Dendritic cell treated with granulocyte-macrophage colony-stimulating factor and Interleukin-4, amounts not matched to agents 40 ng/mL and 50 ng/mL, for 4 days (primary cell): ENCODE measurements at regions of chr9 and their contacts with region 1.

Region 1: GRCh38 chr9:127734747-127735529 is at the start of gene TOR2A:
- H3K4me3 Mint-ChIP-seq: peak within 1 kb of the TSS; percentile 82
- H3K27ac Mint-ChIP-seq: peak within 1 kb of the TSS; percentile 86
- H3K4me1 Mint-ChIP-seq: peaks cover 20% of the 10 kb centered on the region
- H3K27me3 Mint-ChIP-seq: no peaks in the 10 kb centered on the region

Region 2: GRCh38 chr9:127505481-127506173 is 229.3 kb before region 1 on chr9:
- intact Hi-C with region 1: no loop called
- H3K4me3 Mint-ChIP-seq: no peak overlapping the region
- H3K27ac Mint-ChIP-seq: no peak overlapping the region
- H3K4me1 Mint-ChIP-seq: no peaks in the 10 kb centered on the region
- H3K27me3 Mint-ChIP-seq: no peaks in the 10 kb centered on the region

Region 3: GRCh38 chr9:127525401-127526187 is 209.3 kb before region 1 on chr9:
- intact Hi-C with region 1: loop called (anchors 10 kb)
- H3K4me3 Mint-ChIP-seq: no peak overlapping the region
- H3K27ac Mint-ChIP-seq: peak overlapping the region; percentile 43
- H3K4me1 Mint-ChIP-seq: peaks cover 64% of the 10 kb centered on the region
- H3K27me3 Mint-ChIP-seq: no peaks in the 10 kb centered on the region

Region 4: GRCh38 chr9:127586537-127586936 is 148.4 kb before region 1 on chr9:
- intact Hi-C with region 1: loop called (anchors 1 kb)
- H3K4me3 Mint-ChIP-seq: peak overlapping the region; percentile 53
- H3K27ac Mint-ChIP-seq: peak overlapping the region; percentile 10
- H3K4me1 Mint-ChIP-seq: peaks cover 61% of the 10 kb centered on the region
- H3K27me3 Mint-ChIP-seq: no peaks in the 10 kb centered on the region

Region 5: DNA sequence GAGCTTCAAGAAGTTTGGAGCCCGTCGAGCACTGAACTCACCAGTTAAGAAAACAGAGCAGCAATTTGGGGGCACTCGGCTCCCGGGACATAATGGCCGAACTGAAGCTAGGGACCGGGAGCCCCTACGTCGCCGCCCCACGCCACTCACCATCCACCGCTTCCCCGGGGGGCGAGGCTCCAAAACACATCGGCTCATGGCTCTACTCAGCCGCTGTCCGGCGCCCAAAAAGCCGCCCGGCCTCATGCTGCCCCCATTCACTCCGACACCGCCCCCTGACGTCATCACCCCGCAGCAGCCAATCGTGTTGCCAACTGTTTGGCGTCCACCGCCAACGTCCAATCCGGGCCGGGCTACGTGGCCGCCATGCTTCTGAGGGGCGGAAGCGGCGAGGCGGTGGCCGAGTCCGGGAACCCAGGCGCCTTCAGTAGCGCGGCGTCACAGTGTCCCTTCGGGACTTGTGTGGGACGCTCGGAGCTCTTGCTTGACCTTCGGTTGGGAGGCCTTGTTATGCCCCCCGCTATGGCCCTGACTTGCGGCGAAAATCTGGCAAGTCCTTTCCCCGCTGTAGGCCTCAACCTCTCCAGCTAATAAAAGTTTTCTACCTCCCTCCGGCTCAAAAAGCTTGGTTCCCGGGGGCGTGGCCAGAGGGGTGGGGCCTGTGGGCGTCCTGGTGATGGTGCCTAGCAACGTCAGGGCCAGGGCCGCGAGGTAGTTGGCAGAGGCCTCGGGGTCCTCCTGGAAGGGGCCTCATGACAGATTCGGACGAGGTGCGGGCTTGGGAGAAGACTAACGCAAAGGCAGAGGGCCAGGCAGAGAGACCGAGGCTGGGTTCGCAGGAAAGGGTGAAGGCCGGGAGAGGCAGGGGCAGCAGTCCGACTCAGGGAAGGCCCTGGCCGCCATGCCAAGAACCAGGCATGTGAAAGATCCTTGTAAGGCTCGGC is 19.3 kb before region 1 on chr9 and contains the starts of genes PTRH1 and TTC16:
- intact Hi-C with region 1: loop called (anchors 1 kb)
- H3K4me3 Mint-ChIP-seq: peak within 1 kb of the TSS; percentile 98
- H3K27ac Mint-ChIP-seq: peak within 1 kb of the TSS; percentile 90
- H3K4me1 Mint-ChIP-seq: peaks cover 42% of the 10 kb centered on the region
- H3K27me3 Mint-ChIP-seq: peaks cover 13% of the 10 kb centered on the region

Region 6: GRCh38 chr9:127785023-127785932 is 50.3 kb after region 1 on chr9:
- intact Hi-C with region 1: loop called (anchors 1 kb)
- H3K4me3 Mint-ChIP-seq: peak overlapping the region; percentile 97
- H3K27ac Mint-ChIP-seq: peak overlapping the region; percentile 85
- H3K4me1 Mint-ChIP-seq: peaks cover 75% of the 10 kb centered on the region
- H3K27me3 Mint-ChIP-seq: no peaks in the 10 kb centered on the region

Region 7: GRCh38 chr9:127869310-127870152 is 134.6 kb after region 1 on chr9:
- intact Hi-C with region 1: loop called (anchors 2 kb)
- H3K4me3 Mint-ChIP-seq: no peak overlapping the region
- H3K27ac Mint-ChIP-seq: peak overlapping the region; percentile 28
- H3K4me1 Mint-ChIP-seq: peaks cover 40% of the 10 kb centered on the region
- H3K27me3 Mint-ChIP-seq: peaks cover 1% of the 10 kb centered on the region

Region 8: DNA sequence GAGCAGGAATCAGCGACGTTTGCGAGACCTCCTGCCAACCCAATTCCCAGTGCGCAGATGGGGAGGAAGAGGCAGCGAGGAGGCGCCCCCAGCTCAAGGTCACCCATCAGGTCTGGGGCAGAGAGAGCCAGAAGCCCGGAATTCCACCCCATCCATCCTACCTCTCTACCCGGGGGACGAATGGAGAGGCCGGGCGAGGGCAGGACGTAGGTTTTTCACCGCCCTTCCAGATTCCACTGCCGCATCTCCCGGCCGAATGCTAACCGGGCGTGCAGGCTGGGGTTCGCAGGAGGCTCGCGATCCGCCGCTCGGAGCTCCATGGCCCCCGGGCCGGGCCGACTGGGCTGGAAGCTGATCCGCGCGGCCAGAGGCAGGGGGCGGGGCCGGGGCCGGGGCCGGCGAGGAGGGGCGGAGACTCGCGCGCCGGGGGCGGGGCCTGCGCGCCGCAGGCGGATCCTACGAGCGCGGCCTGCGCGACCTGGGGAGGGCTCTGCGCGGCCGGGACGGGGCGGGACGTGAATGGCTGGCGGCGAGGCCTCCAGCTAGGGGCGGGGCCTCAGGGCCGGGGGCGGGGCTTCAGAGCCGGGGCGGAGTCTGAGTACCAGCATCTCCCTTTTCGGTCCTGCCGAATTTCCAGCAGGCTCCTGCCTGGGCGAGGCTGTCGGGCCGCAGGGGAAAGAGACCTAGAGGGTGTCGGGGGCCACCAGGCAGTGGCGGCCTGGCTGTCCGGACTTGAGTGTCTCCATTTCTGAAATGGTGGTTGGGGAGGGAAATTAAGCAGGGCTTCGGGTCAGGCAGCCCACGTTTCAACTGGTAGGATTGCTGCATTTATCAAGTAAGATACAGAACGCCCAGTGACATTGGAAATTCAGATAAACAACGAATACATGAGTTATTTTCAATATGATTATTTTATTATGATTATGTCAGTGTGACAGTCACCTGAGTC is 182.0 kb after region 1 on chr9 and contains the start of gene ST6GALNAC4:
- intact Hi-C with region 1: loop called (anchors 2 kb)
- H3K4me3 Mint-ChIP-seq: peak within 1 kb of the TSS; percentile 86
- H3K27ac Mint-ChIP-seq: peak within 1 kb of the TSS; percentile 86
- H3K4me1 Mint-ChIP-seq: peaks cover 77% of the 10 kb centered on the region
- H3K27me3 Mint-ChIP-seq: peaks cover 6% of the 10 kb centered on the region

Region 9: DNA sequence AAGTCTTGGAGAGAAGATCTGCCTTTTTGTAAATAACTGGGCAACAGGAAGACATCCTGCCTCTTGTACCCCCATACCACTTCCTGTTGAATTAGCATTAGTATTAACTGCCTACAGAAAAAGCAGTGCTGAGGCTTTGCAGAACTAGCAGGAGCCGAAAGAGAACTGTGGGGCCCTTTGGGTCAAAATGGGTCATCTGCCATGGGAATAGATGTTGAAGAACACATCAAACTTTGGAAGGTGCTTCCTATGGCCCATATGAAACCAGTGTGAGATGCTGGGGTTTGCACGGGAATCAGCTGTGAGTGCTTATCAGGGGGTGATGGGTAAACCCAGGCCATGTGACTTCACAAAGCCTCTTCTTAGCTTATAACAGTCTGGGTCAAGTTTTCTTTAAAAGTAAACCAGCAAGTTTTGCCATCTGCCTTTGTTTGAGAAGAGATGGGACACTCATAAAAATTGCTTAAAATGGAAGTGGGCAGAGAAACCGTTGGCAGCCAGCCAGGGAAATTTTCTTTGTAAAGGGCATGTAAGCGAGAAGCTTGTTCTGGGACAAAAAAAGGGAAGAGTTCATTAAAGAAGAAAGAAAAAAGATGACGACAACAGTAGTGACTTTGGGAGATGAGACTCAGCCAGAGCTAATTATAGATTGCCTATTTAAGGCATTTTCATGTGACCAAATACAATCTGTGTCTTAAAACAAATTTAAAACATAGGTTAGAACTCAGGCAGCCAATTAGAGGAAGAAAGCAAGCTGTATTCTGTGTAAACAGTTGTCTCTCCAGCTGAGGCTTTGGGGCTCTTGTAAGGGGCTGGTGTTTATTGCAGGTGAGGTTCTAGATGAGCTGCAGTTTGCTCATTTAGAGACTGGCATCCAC is 337.4 kb after region 1 on chr9:
- intact Hi-C with region 1: no loop called
- H3K4me3 Mint-ChIP-seq: peak overlapping the region; percentile 47
- H3K27ac Mint-ChIP-seq: no peak overlapping the region
- H3K4me1 Mint-ChIP-seq: peaks cover 67% of the 10 kb centered on the region
- H3K27me3 Mint-ChIP-seq: no peaks in the 10 kb centered on the region